Activated B cell treated with CpG ODN at 0.5 μM for 24 hours (primary cell): ENCODE measurements at regions of chr1 and their contacts with region 1.

Region 1: GRCh38 chr1:165597883-165598675 is 33.0 kb upstream of the MGST3 start:
- DNase-seq: peak; percentile 79
- ATAC-seq: peak; percentile 98
- H3K4me3 Mint-ChIP-seq: peak overlapping the region; percentile 92
- H3K27ac Mint-ChIP-seq: peak overlapping the region; percentile 62
- H3K4me1 Mint-ChIP-seq: peaks cover 25% of the 10 kb centered on the region
- H3K27me3 Mint-ChIP-seq: peaks cover 25% of the 10 kb centered on the region
- CTCF ChIP-seq: no peak

Region 2: DNA sequence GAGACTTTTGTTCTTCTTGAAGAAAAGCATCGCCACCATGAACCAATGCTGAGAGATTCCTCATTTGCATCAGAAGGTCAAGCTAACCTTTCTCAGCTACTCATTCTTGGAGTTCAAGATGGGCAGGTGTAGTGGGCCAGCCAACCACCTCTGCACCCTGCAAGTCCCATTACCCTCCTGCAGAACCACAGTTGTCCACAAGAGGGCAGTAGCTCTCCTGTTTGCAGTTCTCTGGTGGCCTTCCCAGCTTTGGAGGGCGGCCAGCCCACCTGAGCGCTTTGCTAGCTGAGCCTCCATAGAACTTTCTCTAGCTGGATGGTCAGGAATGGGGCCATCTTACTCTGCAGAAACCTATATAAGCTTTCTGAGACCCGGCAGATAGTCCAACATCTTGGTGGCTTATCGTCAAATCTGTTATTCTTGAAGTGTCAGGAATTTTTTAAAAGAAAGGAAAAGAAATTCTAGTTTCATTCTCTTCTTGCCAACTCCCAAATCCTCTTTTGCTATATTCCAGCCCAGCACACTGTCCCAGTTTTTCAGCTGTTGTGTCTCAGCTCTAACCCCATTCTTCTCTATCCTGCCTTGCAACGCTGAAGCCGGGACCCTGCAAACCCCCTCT is 230.6 kb before region 1 on chr1:
- CTCF ChIA-PET with region 1: interaction called, 59 read pairs
- POLR2A ChIA-PET with region 1: no interaction called
- intact Hi-C with region 1: loop called (anchors 1 kb)
- DNase-seq: peak; percentile 51
- ATAC-seq: peak; percentile 75
- H3K4me3 Mint-ChIP-seq: no peak overlapping the region
- H3K27ac Mint-ChIP-seq: no peak overlapping the region
- H3K4me1 Mint-ChIP-seq: peaks cover 3% of the 10 kb centered on the region
- H3K27me3 Mint-ChIP-seq: peaks cover 59% of the 10 kb centered on the region
- CTCF ChIP-seq: no peak

Region 3: DNA sequence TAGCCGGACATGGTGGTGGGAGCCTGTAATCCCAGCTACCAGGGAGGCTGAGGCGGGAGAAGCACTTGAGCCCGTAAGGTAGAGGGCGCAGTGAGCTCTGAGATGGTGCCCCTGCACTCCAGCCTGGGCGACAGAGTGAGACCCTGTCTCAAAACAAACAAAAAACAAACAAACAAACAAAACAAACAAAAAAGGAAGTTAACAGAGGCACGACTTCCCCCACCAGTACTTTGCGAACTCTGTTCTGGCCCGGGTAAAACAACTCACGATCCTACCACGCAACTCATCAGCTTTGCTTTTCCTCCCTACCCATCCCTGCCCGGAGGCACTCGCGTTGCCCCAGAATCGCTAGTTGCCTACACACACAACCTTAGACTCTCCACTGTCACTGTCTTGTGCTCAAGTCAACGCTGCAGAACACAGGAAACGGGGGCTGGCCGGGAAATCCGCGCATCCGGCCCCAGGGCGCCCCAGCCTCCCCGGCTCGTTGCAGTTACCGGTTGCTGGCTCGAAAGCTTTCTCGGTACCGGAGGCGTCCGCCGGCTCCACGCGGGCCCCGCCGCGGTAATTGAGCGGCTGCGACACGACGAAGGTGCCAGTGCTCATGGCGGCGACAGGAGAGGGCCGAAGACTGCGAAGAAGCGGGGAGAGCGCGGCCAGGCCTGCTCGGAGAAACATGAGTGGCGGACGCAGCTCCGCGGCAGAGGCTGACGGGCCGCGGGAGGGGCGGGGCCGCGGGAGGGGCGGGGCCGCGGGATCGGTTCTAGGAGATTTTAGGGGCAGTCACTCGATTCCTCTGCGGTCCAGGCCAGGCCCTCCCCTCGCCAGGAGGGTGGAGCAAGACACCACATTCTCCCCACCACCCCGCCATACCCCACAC is 100.0 kb after region 1 on chr1 and contains the start of gene ALDH9A1:
- CTCF ChIA-PET with region 1: no interaction called
- POLR2A ChIA-PET with region 1: interaction called, 4 read pairs
- intact Hi-C with region 1: loop called (anchors 5 kb)
- DNase-seq: peak; percentile 86
- ATAC-seq: peak; percentile 93
- H3K4me3 Mint-ChIP-seq: peak within 1 kb of the TSS; percentile 91
- H3K27ac Mint-ChIP-seq: peak within 1 kb of the TSS; percentile 91
- H3K4me1 Mint-ChIP-seq: peaks cover 27% of the 10 kb centered on the region
- H3K27me3 Mint-ChIP-seq: peaks cover 4% of the 10 kb centered on the region
- CTCF ChIP-seq: no peak
- total RNA-seq, gene ALDH9A1: 30.3 and 35.8 TPM in 2 replicates

Region 4: GRCh38 chr1:165827268-165828102 is 229.4 kb after region 1 on chr1 and contains the start of gene UCK2:
- CTCF ChIA-PET with region 1: no interaction called
- POLR2A ChIA-PET with region 1: no interaction called
- intact Hi-C with region 1: loop called (anchors 1 kb)
- DNase-seq: peak; percentile 70
- ATAC-seq: peak; percentile 75
- H3K4me3 Mint-ChIP-seq: peak within 1 kb of the TSS; percentile 92
- H3K27ac Mint-ChIP-seq: peak within 1 kb of the TSS; percentile 80
- H3K4me1 Mint-ChIP-seq: peaks cover 21% of the 10 kb centered on the region
- H3K27me3 Mint-ChIP-seq: no peaks in the 10 kb centered on the region
- CTCF ChIP-seq: no peak
- total RNA-seq, gene UCK2: 19.6 and 22.8 TPM in 2 replicates

Region 5: GRCh38 chr1:166166695-166167571 is 568.9 kb after region 1 on chr1 and contains the start of gene FAM78B:
- CTCF ChIA-PET with region 1: no interaction called
- POLR2A ChIA-PET with region 1: no interaction called
- intact Hi-C with region 1: loop called (anchors 2 kb)
- DNase-seq: peak; percentile 55
- ATAC-seq: peak; percentile 84
- H3K4me3 Mint-ChIP-seq: peak within 1 kb of the TSS; percentile 77
- H3K27ac Mint-ChIP-seq: no peak within 1 kb of the TSS
- H3K4me1 Mint-ChIP-seq: peaks cover 19% of the 10 kb centered on the region
- H3K27me3 Mint-ChIP-seq: peaks cover 25% of the 10 kb centered on the region
- CTCF ChIP-seq: no peak
- total RNA-seq, gene FAM78B: 0.64 and 1.00 TPM in 2 replicates